Gastrocnemius medialis (tissue), 4 donors: ENCODE measurements at regions of chr13 and their contacts with region 1.

Region 1: GRCh38 chr13:85816413-85816812 is 17.2 kb upstream of the SLITRK6 start:
- DNase-seq: no peak
- ATAC-seq: no peak
- H3K4me3 ChIP-seq: no peak overlapping the region
- H3K27ac ChIP-seq: no peak overlapping the region
- H3K4me1 ChIP-seq: no peaks in the 10 kb centered on the region
- H3K27me3 ChIP-seq: no peaks in the 10 kb centered on the region
- CTCF ChIP-seq: no peak
- POLR2A ChIP-seq: no peak

Region 2: GRCh38 chr13:84896128-84896527 is 920.3 kb before region 1 on chr13:
- in situ Hi-C with region 1: loop called (anchors 10 to 25 kb)
- intact Hi-C with region 1: no loop called
- DNase-seq: no peak
- ATAC-seq: no peak
- H3K4me3 ChIP-seq: no peak overlapping the region
- H3K27ac ChIP-seq: no peak overlapping the region
- H3K4me1 ChIP-seq: no peaks in the 10 kb centered on the region
- H3K27me3 ChIP-seq: no peaks in the 10 kb centered on the region
- CTCF ChIP-seq: peak in 4 of 5 experiments; percentile 14 to 43 (median 28)
- POLR2A ChIP-seq: no peak

Region 3: GRCh38 chr13:85597790-85598500 is 218.5 kb before region 1 on chr13:
- in situ Hi-C with region 1: no loop called
- intact Hi-C with region 1: no loop called
- DNase-seq: no peak
- ATAC-seq: no peak
- H3K4me3 ChIP-seq: no peak overlapping the region
- H3K27ac ChIP-seq: no peak overlapping the region
- H3K4me1 ChIP-seq: no peaks in the 10 kb centered on the region
- H3K27me3 ChIP-seq: no peaks in the 10 kb centered on the region
- CTCF ChIP-seq: no peak
- POLR2A ChIP-seq: no peak